ENCODE measurements at regions of chr10 and their contacts with region 1.

Region 1: DNA sequence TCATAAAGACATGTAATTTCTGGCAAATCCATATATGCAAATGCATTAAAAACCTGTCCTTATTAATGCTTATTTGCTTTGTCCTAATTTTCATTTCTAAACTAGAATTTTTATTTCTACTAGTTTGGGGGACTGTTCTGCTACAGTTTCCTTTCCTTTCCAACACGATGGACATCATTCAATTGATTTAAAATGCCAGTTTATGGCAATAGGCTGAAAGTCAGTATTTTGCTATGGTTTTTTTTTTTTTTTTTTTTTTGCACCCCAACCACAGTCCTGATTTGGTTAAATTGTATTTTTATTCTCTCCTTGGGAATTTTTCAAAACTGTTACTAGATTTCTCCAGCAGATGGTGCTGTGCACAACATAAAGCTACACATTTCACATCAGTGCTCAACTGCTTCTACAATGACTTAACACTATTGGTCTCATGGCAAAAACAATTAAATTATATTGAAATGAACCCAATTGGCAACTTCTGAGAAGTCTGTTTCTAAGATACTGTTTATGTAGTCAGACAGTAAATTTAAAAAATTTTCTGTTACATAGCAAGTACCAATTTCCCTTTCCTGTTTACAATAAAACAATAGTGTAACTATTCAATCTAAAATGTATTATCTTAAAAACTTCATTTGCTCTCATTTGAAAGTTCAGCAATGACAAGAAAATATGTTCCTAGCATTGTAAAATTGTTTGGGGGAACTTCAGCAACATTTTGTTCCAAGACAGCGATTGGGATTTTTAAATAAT is 193.8 kb upstream of the CCDC6 start:
- DNase-seq: no peak
- H3K4me3 ChIP-seq: no peak overlapping the region
- H3K27ac ChIP-seq: no peak overlapping the region
- H3K4me1 ChIP-seq: no peaks in the 10 kb centered on the region
- H3K27me3 ChIP-seq: no peaks in the 10 kb centered on the region
- CTCF ChIP-seq: peak in 2 of 3 donors; percentile 40 to 52
- EP300 ChIP-seq: no peak
- POLR2A ChIP-seq: no peak

Region 2: GRCh38 chr10:59633063-59633462 is 467.1 kb before region 1 on chr10:
- intact Hi-C with region 1: no loop called
- DNase-seq: no peak
- H3K4me3 ChIP-seq: no peak overlapping the region
- H3K27ac ChIP-seq: no peak overlapping the region
- H3K4me1 ChIP-seq: no peaks in the 10 kb centered on the region
- H3K27me3 ChIP-seq: no peaks in the 10 kb centered on the region
- CTCF ChIP-seq: no peak
- EP300 ChIP-seq: no peak
- POLR2A ChIP-seq: no peak

Region 3: DNA sequence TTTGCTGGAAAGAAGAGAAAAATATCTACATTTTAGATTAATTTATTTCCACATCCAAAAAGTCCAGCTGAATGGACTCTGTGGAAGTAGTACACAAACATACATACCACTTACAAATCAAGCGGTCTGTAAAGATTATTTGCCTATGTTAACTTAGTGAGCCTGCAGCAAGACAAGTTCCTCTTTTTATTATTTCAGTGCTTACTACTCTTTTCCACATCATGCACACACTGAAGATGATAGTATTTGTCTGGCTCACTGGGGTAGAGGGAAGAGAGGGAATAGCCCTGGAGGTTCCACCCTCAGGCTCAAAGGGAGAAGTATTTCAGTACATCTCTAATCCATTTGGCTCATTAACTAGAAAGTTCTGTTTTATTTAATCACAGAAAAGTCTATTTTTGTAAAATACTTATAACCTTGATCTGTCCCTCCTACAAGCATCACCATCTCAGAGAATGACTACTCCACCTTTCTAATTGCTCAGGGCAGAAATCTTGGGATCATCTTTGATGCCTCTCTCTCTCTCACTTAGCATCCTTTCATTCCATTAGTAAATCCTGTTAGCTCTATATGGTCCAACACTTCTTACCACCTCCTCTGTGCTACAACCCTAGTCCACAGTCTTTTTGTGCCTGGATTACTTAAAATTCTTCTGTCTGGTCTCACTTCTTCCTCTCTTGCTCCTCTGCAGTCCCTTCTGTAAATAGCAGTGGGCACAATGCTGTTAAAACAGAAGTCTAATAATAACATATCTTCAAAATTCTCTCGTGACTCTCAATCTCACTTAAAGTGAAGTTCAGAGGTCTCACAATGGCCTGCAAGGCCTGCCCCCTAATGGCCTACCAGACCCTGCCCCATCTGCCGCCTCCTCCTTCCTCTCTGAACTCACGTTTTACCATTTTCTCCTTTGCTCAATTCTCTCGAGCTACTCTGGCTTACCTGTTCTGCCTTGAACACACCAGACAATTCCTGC is 129.5 kb before region 1 on chr10:
- intact Hi-C with region 1: no loop called
- DNase-seq: no peak
- H3K4me3 ChIP-seq: no peak overlapping the region
- H3K27ac ChIP-seq: no peak overlapping the region
- H3K4me1 ChIP-seq: no peaks in the 10 kb centered on the region
- H3K27me3 ChIP-seq: no peaks in the 10 kb centered on the region
- CTCF ChIP-seq: no peak
- EP300 ChIP-seq: no peak
- POLR2A ChIP-seq: no peak

Region 4: DNA sequence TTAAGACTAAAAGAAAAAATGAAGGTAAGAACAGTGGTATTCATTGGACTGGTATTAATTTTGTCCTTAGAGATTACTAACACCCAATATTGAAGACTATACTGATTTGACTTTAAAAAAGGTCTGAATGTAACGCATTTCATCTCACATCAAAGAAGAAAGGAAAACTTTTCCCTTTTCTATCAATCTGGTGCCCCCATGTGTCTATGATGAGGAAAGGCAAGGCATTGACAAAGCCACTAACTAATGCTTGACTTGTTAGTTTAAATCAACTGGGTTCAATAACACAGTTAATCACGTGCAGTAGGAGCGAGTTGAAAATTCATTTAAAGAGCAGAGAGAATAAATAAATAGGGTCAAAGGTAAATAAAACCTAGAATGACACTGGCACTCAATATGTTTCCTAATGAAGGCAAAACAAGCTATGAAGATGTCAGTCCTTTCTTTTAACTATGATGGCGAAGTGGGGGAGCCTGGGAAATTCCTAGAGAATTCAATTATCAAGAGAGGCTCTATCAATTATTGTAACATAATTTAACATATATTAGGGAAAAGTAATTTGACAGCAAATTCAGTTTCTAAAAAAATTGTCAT is 108.6 kb after region 1 on chr10:
- intact Hi-C with region 1: loop called (anchors 5 to 10 kb)
- DNase-seq: no peak
- H3K4me3 ChIP-seq: no peak overlapping the region
- H3K27ac ChIP-seq: no peak overlapping the region
- H3K4me1 ChIP-seq: no peaks in the 10 kb centered on the region
- H3K27me3 ChIP-seq: no peaks in the 10 kb centered on the region
- CTCF ChIP-seq: peak in 2 of 3 donors; percentile 31 to 71
- EP300 ChIP-seq: no peak
- POLR2A ChIP-seq: no peak

Region 5: GRCh38 chr10:60434418-60435046 is 334.4 kb after region 1 on chr10:
- intact Hi-C with region 1: loop called in 2 of 4 experiments (anchors 5 kb)
- DNase-seq: peak in 3 of 5 donors; percentile 11 to 39 (median 25)
- H3K4me3 ChIP-seq: no peak overlapping the region
- H3K27ac ChIP-seq: no peak overlapping the region
- H3K4me1 ChIP-seq: no peaks in the 10 kb centered on the region
- H3K27me3 ChIP-seq: no peaks in the 10 kb centered on the region
- CTCF ChIP-seq: peak in 2 of 3 donors; percentile 60 to 63
- EP300 ChIP-seq: no peak
- POLR2A ChIP-seq: no peak

Region 6: GRCh38 chr10:60646966-60647796 is 547.0 kb after region 1 on chr10:
- intact Hi-C with region 1: loop called in 1 of 4 experiments (anchors 10 kb)
- DNase-seq: peak in 2 of 5 donors; percentile 27 to 47
- H3K4me3 ChIP-seq: no peak overlapping the region
- H3K27ac ChIP-seq: no peak overlapping the region
- H3K4me1 ChIP-seq: peaks cover 1% of the 10 kb centered on the region
- H3K27me3 ChIP-seq: no peaks in the 10 kb centered on the region
- CTCF ChIP-seq: peak; percentile 52 to 66 (median 64)
- EP300 ChIP-seq: no peak
- POLR2A ChIP-seq: no peak